Mammary epithelial cell (primary cell): ENCODE measurements at regions of chr1 and their contacts with region 1.

Region 1: GRCh38 chr1:119582801-119583200 is 65.3 kb downstream of the ZNF697 start:
- DNase-seq: peak; percentile 78
- H3K4me3 ChIP-seq: no peak overlapping the region
- H3K27ac ChIP-seq: no peak overlapping the region
- H3K4me1 ChIP-seq: peaks cover 4% of the 10 kb centered on the region
- H3K27me3 ChIP-seq: no peaks in the 10 kb centered on the region
- CTCF ChIP-seq: peak; percentile 49 to 81

Region 2: DNA sequence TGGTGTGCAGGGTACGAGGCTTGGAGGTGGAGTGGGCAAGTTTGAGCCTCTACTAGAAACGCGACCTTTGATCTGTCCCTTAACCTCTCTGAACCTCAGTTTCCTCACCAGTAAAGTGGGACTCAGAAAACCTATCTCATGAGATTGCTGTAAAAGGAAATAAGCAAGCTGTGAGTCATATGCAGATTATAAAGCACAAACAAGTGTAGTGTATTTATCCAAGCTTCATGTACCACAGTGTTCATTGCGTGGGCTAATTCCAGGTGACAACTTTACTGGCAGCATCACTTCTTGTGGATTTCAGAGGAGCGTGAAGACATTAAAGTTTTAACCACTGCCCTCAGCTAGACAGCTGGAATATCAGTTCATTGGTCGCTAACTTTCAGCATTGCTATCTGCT is 20.9 kb after region 1 on chr1:
- CTCF ChIA-PET with region 1: no interaction called
- dilution Hi-C with region 1: no loop called
- in situ Hi-C with region 1: no loop called
- intact Hi-C with region 1: loop called (anchors 2 kb)
- DNase-seq: peak; percentile 14
- H3K4me3 ChIP-seq: no peak overlapping the region
- H3K27ac ChIP-seq: no peak overlapping the region
- H3K4me1 ChIP-seq: peaks cover 23% of the 10 kb centered on the region
- H3K27me3 ChIP-seq: no peaks in the 10 kb centered on the region
- CTCF ChIP-seq: no peak

Region 3: GRCh38 chr1:119647734-119648619 is 65.2 kb after region 1 on chr1 and contains the start of gene ZNF697:
- CTCF ChIA-PET with region 1: no interaction called
- dilution Hi-C with region 1: no loop called
- in situ Hi-C with region 1: no loop called
- intact Hi-C with region 1: no loop called
- DNase-seq: peak; percentile 97
- H3K4me3 ChIP-seq: peak within 1 kb of the TSS; percentile 64 to 83 (median 71)
- H3K27ac ChIP-seq: peak within 1 kb of the TSS; percentile 67
- H3K4me1 ChIP-seq: peaks cover 47% of the 10 kb centered on the region
- H3K27me3 ChIP-seq: no peaks in the 10 kb centered on the region
- CTCF ChIP-seq: peak; percentile 4 to 11
- total RNA-seq, gene ZNF697: 7.3 to 9.4 TPM

Region 4: DNA sequence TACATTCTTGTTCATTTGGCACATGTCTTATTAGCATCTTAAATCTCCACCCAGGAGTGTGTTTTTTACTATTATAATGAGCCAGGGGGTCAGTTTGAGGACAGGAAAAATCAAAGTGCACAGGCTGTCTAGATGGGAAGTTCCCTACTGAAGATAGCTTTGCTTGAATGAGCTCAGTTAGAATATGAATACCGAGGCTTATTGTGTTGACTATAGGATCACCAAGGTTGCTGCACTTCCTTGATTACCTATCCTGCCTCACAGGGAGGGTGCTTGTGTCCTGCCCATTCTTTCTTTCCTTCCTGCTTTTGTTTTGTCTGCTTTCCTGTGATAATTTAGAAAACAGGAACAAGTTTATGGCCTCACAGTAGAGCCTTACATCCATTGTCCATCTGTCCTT is 145.2 kb after region 1 on chr1:
- CTCF ChIA-PET with region 1: no interaction called
- dilution Hi-C with region 1: no loop called
- in situ Hi-C with region 1: no loop called
- intact Hi-C with region 1: no loop called
- DNase-seq: no peak
- H3K4me3 ChIP-seq: no peak overlapping the region
- H3K27ac ChIP-seq: no peak overlapping the region
- H3K4me1 ChIP-seq: peaks cover 19% of the 10 kb centered on the region
- H3K27me3 ChIP-seq: no peaks in the 10 kb centered on the region
- CTCF ChIP-seq: no peak